ENCODE measurements at regions of chr6 and their contacts with region 1.

Region 1: GRCh38 chr6:129872591-129872990 is 11.5 kb upstream of the TMEM244 start:
- DNase-seq: no peak
- H3K4me3 ChIP-seq: no peak overlapping the region
- H3K27me3 ChIP-seq: no peaks in the 10 kb centered on the region
- CTCF ChIP-seq: no peak

Region 2: DNA sequence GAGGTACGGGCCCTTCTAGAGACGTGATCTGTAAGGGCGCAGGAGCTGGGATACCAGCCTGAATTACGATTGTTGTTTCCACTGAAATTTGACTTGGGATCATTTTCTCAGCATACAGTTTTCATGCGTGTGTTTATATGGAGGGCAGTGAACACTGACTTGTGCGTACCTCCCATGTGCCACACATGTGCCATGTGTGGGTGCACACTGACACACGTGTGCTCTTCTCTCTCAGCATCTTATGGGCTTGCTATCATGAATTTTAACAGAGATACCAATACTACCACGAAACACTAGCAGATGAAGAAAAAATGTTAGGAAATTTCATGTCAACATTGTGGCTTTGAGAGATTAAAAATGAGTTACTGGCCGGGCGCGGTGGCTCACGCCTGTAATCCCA is 184.9 kb after region 1 on chr6:
- CTCF ChIA-PET with region 1: no interaction called
- POLR2A ChIA-PET with region 1: interaction called, 10 read pairs
- DNase-seq: no peak
- H3K4me3 ChIP-seq: no peak overlapping the region
- H3K27me3 ChIP-seq: no peaks in the 10 kb centered on the region
- CTCF ChIP-seq: no peak

Measured in BJ (cell line).